Left ventricle myocardium superior (tissue), 1 donor: ENCODE measurements at regions of chr22 and their contacts with region 1.

Region 1: DNA sequence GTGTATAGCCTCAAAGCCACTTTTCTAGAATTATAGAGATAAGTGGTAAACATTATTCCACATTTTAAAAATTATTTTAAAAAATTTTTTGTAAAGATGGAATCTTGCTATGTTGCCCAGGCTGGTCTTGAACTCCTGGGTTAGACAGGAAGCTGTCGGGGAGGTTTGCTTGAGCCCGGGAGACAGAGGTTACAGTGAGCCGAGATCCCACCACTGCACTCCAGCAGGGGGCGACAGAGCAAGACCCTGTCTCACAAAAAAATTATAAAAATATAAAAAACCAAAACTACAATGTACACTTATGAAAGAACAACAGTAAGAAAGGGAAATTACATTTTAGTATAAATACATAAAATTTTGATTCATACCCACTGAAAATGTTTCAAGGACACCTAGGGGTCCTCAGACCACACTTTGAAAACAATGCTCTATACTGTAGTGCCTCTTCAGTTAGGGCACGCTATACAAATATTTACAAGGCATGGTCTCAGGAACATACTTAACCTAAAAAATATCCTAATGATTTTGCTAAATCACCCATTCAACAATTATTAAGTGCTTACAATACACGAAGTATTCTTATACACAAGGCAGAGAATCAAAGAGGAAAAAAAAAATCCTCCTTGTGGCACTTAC is 111.2 kb downstream of the MRTFA start:
- DNase-seq: peak; percentile 67
- ATAC-seq: no peak

Region 2: GRCh38 chr22:40636380-40637182 is 111.2 kb after region 1 on chr22 and contains the start of gene MRTFA:
- intact Hi-C with region 1: loop called (anchors 10 kb)
- DNase-seq: peak; percentile 100
- ATAC-seq: peak; percentile 96
- total RNA-seq, gene MRTFA: 32.5 TPM